ENCODE measurements at regions of chr6 and their contacts with region 1.

Region 1: GRCh38 chr6:4606821-4607704 is 169.1 kb upstream of the CDYL start:
- DNase-seq: peak; percentile 62 to 95 (median 76)
- H3K4me3 ChIP-seq: peak overlapping the region in 57 of 59 donors; percentile 3 to 60 (median 34)
- H3K27ac ChIP-seq: peak overlapping the region in 58 of 59 donors; percentile 36 to 96 (median 87)
- H3K27me3 ChIP-seq: no peaks in the 10 kb centered on the region
- CTCF ChIP-seq: peak in 3 of 56 donors; percentile 14 to 26 (median 22)

Region 2: DNA sequence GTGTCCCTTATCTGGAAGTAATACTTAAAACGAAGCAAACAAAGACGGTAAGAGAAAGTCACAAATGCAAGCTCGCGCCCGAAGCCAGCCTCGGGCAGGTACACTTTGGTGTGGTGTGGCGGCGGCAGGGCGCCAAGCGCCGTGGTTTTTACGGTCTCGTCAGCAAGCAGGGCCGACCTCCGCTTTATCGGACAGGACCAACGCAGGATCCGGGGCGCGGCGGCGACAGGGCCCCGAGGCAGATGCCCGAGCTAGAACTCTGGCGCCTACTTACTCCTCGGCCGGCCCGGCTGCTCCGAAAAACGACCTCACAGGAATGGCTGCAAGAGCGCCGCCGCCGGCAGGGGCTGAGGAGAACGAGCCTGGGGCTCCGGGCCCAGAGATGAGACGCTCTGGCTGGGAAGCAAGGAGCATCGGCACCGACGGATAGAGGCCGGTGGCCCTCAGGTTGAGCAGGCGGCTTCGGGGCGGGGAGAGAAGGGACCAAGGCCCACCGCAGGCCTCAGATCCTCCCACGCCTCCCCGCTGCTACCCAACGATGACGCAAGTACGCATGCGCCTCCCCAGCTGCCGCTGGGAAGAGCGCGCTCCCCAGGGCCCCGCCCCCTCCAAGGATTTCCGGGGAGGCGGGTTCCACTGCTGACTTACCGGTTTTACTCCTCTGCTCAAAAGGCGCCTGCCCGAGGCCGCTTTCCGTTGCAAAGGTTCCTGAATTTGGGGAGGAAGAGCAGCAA is 588.7 kb before region 1 on chr6:
- intact Hi-C with region 1: loop called in 1 of 2 experiments (anchors 5 kb)
- DNase-seq: peak; percentile 83 to 97 (median 92)
- H3K4me3 ChIP-seq: peak overlapping the region; percentile 55 to 97 (median 85)
- H3K27ac ChIP-seq: peak overlapping the region; percentile 82 to 100 (median 97)
- H3K27me3 ChIP-seq: no peaks in the 10 kb centered on the region
- CTCF ChIP-seq: peak in 55 of 56 donors; percentile 32 to 80 (median 59)

Region 3: DNA sequence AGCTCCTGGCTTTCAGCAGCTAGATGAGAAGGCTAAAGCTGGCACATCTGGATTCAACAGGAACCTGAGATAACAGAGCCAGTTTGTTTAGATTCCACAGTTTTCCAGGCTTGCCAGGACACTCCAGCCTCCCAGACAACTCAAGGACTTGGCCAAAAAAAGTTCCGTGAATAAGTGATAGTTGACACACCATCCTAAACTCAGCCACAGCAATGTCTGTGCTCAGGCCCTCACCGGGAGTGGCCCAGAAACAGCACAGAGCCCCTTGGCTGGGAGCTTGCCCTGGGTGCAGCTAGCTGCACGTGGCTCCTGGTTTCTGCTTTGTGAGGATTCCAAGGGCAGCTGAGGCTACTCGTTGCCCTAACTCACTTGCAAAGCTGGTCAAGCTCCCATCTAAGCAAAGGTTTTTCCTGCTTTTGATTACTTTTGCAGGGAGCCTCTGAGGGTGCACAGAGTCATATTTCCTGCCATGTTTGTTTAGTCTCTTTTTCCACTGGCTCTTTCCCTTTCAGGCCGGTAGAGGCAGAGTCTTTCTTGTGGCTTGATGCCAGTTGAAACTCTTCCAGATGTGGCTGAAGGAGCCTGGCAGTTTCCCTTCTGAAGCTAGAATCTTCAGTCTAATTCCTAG is 353.3 kb before region 1 on chr6:
- intact Hi-C with region 1: no loop called
- DNase-seq: no peak
- H3K4me3 ChIP-seq: no peak overlapping the region
- H3K27ac ChIP-seq: no peak overlapping the region
- H3K27me3 ChIP-seq: no peaks in the 10 kb centered on the region
- CTCF ChIP-seq: peak in 28 of 56 donors; percentile 10 to 41 (median 26)

Region 4: GRCh38 chr6:4402439-4402976 is 204.6 kb before region 1 on chr6:
- intact Hi-C with region 1: loop called (anchors 5 to 10 kb)
- DNase-seq: peak in 1 of 10 donors; percentile 21
- H3K4me3 ChIP-seq: no peak overlapping the region
- H3K27ac ChIP-seq: peak overlapping the region in 36 of 59 donors; percentile 3 to 81 (median 46)
- H3K27me3 ChIP-seq: no peaks in the 10 kb centered on the region
- CTCF ChIP-seq: no peak

Region 5: DNA sequence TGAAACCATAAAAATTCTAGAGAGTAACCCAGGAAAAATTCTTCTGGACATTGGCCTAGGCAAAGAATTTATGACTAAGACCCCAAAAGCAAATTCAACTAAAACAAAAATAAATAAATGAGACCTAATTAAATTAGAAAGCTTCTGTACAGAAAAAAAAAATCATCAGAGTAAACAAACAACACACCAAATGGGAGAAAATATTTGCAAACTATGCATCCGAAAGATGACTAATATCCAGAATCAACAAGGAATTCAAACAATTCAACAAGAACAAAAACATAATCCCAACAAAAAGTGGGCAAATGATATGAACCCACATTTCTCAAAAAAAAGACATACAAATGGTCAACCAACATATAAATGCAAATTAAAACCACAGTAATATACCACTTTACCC is 73.5 kb before region 1 on chr6:
- intact Hi-C with region 1: no loop called
- DNase-seq: no peak
- H3K4me3 ChIP-seq: no peak overlapping the region
- H3K27ac ChIP-seq: no peak overlapping the region
- H3K27me3 ChIP-seq: no peaks in the 10 kb centered on the region
- CTCF ChIP-seq: no peak

Region 6: GRCh38 chr6:4775584-4776494 is 168.8 kb after region 1 on chr6 and contains the start of gene CDYL:
- intact Hi-C with region 1: loop called (anchors 2 to 5 kb)
- DNase-seq: peak; percentile 38 to 89 (median 68)
- H3K4me3 ChIP-seq: peak within 1 kb of the TSS; percentile 37 to 82 (median 70)
- H3K27ac ChIP-seq: peak within 1 kb of the TSS in 45 of 59 donors; percentile 11 to 86 (median 67)
- H3K27me3 ChIP-seq: no peaks in the 10 kb centered on the region
- CTCF ChIP-seq: peak in 5 of 56 donors; percentile 11 to 28 (median 16)
- total RNA-seq, gene CDYL: 59.7 to 141 (median 86.0) TPM

Region 7: GRCh38 chr6:4889701-4890100 is 282.6 kb after region 1 on chr6:
- intact Hi-C with region 1: no loop called
- DNase-seq: no peak
- H3K4me3 ChIP-seq: no peak overlapping the region
- H3K27ac ChIP-seq: no peak overlapping the region
- H3K27me3 ChIP-seq: no peaks in the 10 kb centered on the region
- CTCF ChIP-seq: no peak

Region 8: GRCh38 chr6:4936681-4937041 is 329.6 kb after region 1 on chr6:
- intact Hi-C with region 1: loop called in 1 of 2 experiments (anchors 10 kb)
- DNase-seq: peak in 1 of 10 donors; percentile 21
- H3K4me3 ChIP-seq: peak overlapping the region in 5 of 59 donors; percentile 1 to 27 (median 5)
- H3K27ac ChIP-seq: no peak overlapping the region
- H3K27me3 ChIP-seq: no peaks in the 10 kb centered on the region
- CTCF ChIP-seq: peak; percentile 50 to 84 (median 70)